A549 (cell line): ENCODE measurements at regions of chr9 and their contacts with region 1.

Region 1: DNA sequence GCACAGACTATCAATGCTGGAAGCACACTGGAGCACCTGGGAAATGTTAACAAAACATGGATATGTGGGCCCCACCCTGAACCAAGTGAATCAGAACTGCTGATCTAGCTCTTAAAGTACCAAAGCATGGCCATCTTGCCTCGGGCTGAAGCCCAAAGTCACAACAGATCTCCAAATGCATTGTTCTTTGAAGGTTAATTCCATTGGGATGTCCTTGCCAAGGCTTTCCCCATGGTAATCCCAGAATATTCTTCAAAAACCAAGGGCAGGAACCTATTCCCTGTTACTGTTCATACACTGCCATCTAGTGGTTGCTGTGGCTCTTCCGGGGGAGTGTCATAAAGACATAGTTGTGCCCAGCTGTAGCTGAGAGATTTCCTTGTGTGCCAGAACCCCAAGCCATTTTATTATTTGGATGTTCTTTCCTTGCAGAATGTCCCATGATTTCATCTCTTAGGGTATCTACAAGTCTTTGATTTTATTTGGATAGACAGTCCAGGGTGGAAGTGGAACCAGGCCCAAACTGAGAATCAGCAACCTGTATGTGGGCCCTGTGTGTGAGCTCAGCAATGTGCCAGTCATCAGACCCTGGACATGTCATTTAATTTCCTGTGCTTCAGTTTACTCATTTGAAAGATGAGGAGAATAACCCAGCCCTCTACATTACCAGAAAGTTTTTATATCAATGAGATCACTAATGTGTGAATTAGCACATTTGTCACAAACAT is 290.0 kb downstream of the ACTL7B start:
- DNase-seq: peak; percentile 82 to 83
- ATAC-seq: peak; percentile 95 to 99
- H3K4me3 ChIP-seq: no peak overlapping the region
- H3K27ac ChIP-seq: peak overlapping the region; percentile 25 to 29; a peak in 2 of 6 replicates
- H3K4me1 ChIP-seq: peaks cover 14% of the 10 kb centered on the region; the same call in 1 of the 3 replicates
- CTCF ChIP-seq: peak; percentile 92
- EP300 ChIP-seq: no peak
- POLR2A ChIP-seq: no peak
- RAD21 ChIP-seq: peak; percentile 98

Region 2: GRCh38 chr9:107425101-107426045 is 1140.4 kb before region 1 on chr9:
- CTCF ChIA-PET with region 1: interaction called, 16 read pairs
- POLR2A ChIA-PET with region 1: no interaction called
- DNase-seq: peak; percentile 48 to 72
- ATAC-seq: peak; percentile 82 to 86
- H3K4me3 ChIP-seq: peak overlapping the region; percentile 26
- H3K27ac ChIP-seq: peak overlapping the region; percentile 78 to 89
- H3K4me1 ChIP-seq: peaks cover 5% of the 10 kb centered on the region; the same call in 2 of the 3 replicates
- CTCF ChIP-seq: peak; percentile 71
- EP300 ChIP-seq: no peak
- POLR2A ChIP-seq: no peak
- RAD21 ChIP-seq: peak; percentile 43 to 47; a peak in 4 of 5 replicates

Region 3: DNA sequence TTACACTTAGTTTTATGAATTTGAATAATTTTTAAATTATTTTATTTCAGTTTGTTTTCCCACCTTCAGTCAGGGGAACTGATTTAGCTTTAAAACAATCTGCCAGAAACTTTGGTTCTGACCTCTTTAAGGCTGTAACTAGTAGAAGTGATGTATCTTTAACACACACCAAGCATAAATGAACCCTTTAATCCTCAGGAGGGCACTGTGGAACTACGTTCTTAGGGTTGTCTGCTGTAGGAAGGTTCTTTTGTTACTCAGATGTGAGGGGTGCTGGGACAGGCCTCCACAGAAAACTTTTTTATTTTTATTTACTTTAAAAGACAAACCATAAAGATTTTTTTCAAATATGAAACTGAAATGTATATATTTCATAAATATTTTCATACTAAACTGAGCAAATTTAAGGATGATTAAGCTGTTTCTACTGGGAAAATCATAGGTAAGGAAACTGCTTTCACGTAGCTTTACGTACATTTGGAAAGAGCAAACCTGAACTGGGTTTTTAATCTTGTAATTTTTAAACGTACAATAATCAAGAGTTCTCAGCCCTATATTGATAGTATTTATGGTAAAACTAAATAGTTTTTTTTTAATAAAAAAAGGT is 1081.6 kb before region 1 on chr9:
- CTCF ChIA-PET with region 1: interaction called, 46 read pairs
- POLR2A ChIA-PET with region 1: interaction called, 5 read pairs
- DNase-seq: peak; percentile 51 to 84
- ATAC-seq: peak; percentile 57 to 68; a peak in 4 of 6 replicates
- H3K4me3 ChIP-seq: no peak overlapping the region
- H3K27ac ChIP-seq: no peak overlapping the region
- H3K4me1 ChIP-seq: peaks cover 19% of the 10 kb centered on the region
- CTCF ChIP-seq: peak; percentile 83
- EP300 ChIP-seq: no peak
- POLR2A ChIP-seq: no peak
- RAD21 ChIP-seq: peak; percentile 94 to 97

Region 4: GRCh38 chr9:108412755-108413154 is 153.1 kb before region 1 on chr9:
- CTCF ChIA-PET with region 1: interaction called, 45 read pairs
- POLR2A ChIA-PET with region 1: no interaction called
- DNase-seq: peak in 1 of 2 experiments; percentile 28
- ATAC-seq: no peak; a peak in 1 of 6 replicates
- H3K4me3 ChIP-seq: no peak overlapping the region
- H3K27ac ChIP-seq: no peak overlapping the region
- H3K4me1 ChIP-seq: no peaks in the 10 kb centered on the region
- CTCF ChIP-seq: no peak
- EP300 ChIP-seq: no peak
- POLR2A ChIP-seq: no peak
- RAD21 ChIP-seq: no peak

Region 5: GRCh38 chr9:108478431-108478837 is 87.4 kb before region 1 on chr9:
- CTCF ChIA-PET with region 1: interaction called, 11 read pairs
- POLR2A ChIA-PET with region 1: no interaction called
- DNase-seq: peak; percentile 21 to 73
- ATAC-seq: peak; percentile 54 to 75
- H3K4me3 ChIP-seq: 0 out of 3 replicates have a peak overlapping the region, but pooled peaks have one; percentile 3
- H3K27ac ChIP-seq: peak overlapping the region; percentile 52 to 66; a peak in 5 of 6 replicates
- H3K4me1 ChIP-seq: peaks cover 50% of the 10 kb centered on the region
- CTCF ChIP-seq: no peak
- EP300 ChIP-seq: no peak
- POLR2A ChIP-seq: no peak
- RAD21 ChIP-seq: no peak

Region 6: GRCh38 chr9:108543251-108543768 is 22.5 kb before region 1 on chr9:
- CTCF ChIA-PET with region 1: interaction called, 27 read pairs
- POLR2A ChIA-PET with region 1: no interaction called
- DNase-seq: peak; percentile 68 to 82
- ATAC-seq: peak; percentile 83 to 90
- H3K4me3 ChIP-seq: no peak overlapping the region
- H3K27ac ChIP-seq: peak overlapping the region in 1 of 2 experiments; percentile 27; a peak in 2 of 6 replicates
- H3K4me1 ChIP-seq: peaks cover 11% of the 10 kb centered on the region
- CTCF ChIP-seq: no peak
- EP300 ChIP-seq: no peak
- POLR2A ChIP-seq: no peak
- RAD21 ChIP-seq: no peak

Region 7: DNA sequence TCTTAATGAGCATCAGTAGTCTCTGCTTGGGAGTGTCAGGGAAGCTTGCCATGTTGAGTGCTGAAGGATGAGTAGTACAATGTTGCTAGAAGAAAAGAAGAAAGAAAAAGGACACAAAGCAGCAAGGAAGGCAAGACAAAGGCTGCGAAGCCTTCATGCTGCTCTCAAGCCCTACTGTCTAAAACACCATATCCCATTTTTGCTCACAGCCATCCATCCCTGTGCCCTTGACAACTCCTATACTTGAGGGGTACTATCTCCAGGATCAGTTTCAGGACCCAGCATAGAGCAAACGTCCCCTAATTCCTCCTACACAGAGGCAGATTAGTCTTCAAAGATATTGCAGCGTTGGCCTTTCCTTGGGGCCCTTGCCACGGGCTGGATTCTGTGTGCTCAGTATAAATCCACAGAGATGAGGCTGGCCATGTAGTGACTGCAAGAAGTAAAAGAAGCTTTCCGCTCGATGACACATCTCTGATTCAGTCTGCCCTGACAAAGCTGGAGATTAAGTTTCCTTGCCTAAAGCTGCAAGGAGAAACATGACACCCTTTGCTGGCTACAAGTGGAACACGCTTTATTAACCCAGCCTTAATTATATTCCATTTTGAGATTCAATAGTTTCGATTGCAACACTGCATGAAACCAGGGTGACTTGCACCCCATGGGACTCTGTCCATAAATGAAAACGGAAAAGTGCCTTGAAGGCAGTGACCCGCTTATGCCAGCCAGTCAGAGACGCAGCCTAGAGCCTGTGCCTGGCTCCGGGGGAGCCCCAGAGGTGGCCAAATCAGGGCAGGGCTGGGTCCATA is 14.6 kb before region 1 on chr9:
- CTCF ChIA-PET with region 1: interaction called, 27 read pairs
- POLR2A ChIA-PET with region 1: interaction called, 3 read pairs
- DNase-seq: peak; percentile 33 to 40
- ATAC-seq: peak; percentile 87 to 88
- H3K4me3 ChIP-seq: no peak overlapping the region
- H3K27ac ChIP-seq: peak overlapping the region in 1 of 2 experiments; percentile 59; a peak in 3 of 6 replicates
- H3K4me1 ChIP-seq: peaks cover 30% of the 10 kb centered on the region
- CTCF ChIP-seq: no peak
- EP300 ChIP-seq: no peak
- POLR2A ChIP-seq: no peak
- RAD21 ChIP-seq: no peak